ENCODE measurements at regions of chr3 and their contacts with region 1.

Region 1: GRCh38 chr3:135056084-135056730 is 261.1 kb downstream of the EPHB1 start:
- DNase-seq: no peak
- ATAC-seq: no peak
- H3K4me3 ChIP-seq: no peak overlapping the region
- H3K27ac ChIP-seq: no peak overlapping the region
- H3K4me1 ChIP-seq: no peaks in the 10 kb centered on the region
- H3K27me3 ChIP-seq: no peaks in the 10 kb centered on the region
- CTCF ChIP-seq: no peak
- POLR2A ChIP-seq: no peak
- RAD21 ChIP-seq: no peak

Region 2: GRCh38 chr3:134956395-134956794 is 99.8 kb before region 1 on chr3:
- CTCF ChIA-PET with region 1: no interaction called
- POLR2A ChIA-PET with region 1: no interaction called
- dilution Hi-C with region 1: no loop called
- in situ Hi-C with region 1: loop called (anchors 25 kb)
- intact Hi-C with region 1: no loop called
- DNase-seq: no peak
- ATAC-seq: no peak
- H3K4me3 ChIP-seq: no peak overlapping the region
- H3K27ac ChIP-seq: no peak overlapping the region
- H3K4me1 ChIP-seq: no peaks in the 10 kb centered on the region
- H3K27me3 ChIP-seq: no peaks in the 10 kb centered on the region
- CTCF ChIP-seq: no peak
- POLR2A ChIP-seq: no peak
- RAD21 ChIP-seq: no peak

Region 3: DNA sequence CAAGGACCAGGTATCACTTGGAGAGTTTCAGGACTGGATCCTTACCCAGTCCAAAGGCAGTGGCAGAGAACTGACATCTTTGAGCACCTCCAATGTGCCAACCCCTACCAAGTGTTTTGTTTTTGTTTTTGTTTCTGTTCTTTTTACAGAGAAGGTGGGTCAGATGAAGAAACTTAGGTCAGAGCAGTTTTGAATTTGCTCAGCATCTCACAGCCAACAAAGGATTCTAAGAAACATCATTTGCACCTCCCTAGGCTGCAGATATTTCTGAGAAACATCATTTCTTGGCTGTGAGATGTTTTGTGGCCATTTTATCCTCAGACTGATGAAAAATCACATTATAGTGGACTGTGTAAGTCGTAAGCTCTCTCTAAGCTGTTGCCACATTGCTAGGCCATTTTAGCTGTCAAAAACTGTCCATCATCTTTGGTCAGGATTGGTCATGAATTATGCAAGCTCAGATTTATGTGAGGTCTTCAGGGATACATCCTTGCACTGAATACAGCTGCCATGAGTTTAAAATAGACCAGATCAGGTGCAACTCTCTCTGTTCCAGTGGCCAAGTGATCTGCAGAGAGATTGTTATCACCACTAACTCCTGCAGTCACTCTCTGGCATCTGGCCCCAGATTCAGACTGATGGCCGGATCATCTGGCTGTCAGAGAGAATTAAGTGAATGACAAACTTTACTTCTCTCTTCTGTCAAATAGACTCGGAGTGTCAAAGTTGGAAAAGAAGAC is 80.3 kb after region 1 on chr3:
- CTCF ChIA-PET with region 1: no interaction called
- POLR2A ChIA-PET with region 1: no interaction called
- dilution Hi-C with region 1: no loop called
- in situ Hi-C with region 1: no loop called
- intact Hi-C with region 1: no loop called
- DNase-seq: no peak
- ATAC-seq: no peak
- H3K4me3 ChIP-seq: no peak overlapping the region
- H3K27ac ChIP-seq: no peak overlapping the region
- H3K4me1 ChIP-seq: no peaks in the 10 kb centered on the region
- H3K27me3 ChIP-seq: no peaks in the 10 kb centered on the region
- CTCF ChIP-seq: no peak
- POLR2A ChIP-seq: no peak
- RAD21 ChIP-seq: no peak